ENCODE measurements at regions of chr21 and their contacts with region 1.

Region 1: DNA sequence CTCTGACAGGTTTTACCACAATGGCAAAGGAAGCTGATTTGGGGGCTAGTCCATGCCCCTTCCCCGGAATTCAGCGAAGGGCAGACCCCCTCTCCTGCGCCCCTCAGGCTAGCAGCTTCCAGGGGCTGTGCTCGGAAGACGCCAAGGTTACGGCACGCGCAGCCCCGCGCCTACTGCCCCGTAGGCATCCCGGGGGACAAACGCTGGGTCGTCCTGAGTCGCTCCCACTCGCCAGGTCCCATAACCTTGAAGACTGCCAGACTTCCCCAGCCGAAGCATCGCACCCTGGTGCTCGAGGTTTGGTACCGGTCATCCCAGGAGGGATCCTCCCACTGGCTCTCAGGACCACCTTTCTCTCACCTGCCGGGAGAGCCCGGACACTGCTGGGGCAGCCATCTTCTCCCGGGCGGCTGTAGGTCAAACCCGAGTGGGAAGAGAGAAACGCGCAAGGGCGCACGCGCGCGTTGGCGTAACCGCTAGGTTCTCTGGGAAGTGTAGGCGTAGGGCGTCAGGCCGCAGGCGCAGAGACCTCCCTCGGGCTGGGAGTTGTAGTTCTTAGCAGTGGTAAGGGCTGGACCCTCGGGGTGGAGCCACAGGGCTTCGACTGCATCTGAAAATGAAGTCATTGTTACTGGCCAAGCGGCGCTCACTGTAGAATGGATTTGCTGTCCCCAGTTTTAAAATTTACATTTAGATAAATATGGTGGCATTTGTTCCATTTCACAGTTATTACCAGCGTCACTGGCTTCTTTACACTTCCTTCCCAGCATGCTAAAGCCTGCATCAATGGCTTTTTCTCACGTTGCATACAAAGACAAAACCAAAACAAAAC is at the start of gene ATP5PO:
- DNase-seq: peak in 1 of 2 donors; percentile 97
- H3K4me3 ChIP-seq: peak within 1 kb of the TSS; percentile 94 to 100
- H3K27ac ChIP-seq: peak within 1 kb of the TSS; percentile 92
- H3K4me1 ChIP-seq: peaks cover 24% of the 10 kb centered on the region
- H3K27me3 ChIP-seq: no peaks in the 10 kb centered on the region
- CTCF ChIP-seq: no peak
- POLR2A ChIP-seq: peak in 1 of 2 donors; percentile 69
- total RNA-seq, gene ATP5PO: 133 TPM

Region 2: DNA sequence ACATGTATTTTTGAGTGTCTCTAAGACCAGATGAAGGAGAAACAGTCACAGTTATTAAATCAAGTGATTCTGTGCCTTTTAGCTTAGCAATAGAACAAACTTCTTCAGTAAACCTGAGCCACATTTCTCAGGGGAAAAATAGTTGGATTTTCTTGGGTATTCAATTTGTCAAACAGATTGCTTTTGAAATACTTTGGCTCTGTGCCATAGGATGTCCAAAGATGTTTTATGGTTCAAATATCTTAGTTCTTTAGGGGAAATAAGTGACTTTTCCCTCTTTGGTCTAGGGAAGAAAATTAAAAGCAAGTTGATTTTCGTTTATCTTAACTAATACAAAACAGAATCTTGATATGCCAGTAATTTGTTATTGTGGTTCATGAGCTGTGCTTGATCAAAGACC is 125.9 kb before region 1 on chr21:
- intact Hi-C with region 1: no loop called
- DNase-seq: no peak
- H3K4me3 ChIP-seq: no peak overlapping the region
- H3K27ac ChIP-seq: no peak overlapping the region
- H3K4me1 ChIP-seq: no peaks in the 10 kb centered on the region
- H3K27me3 ChIP-seq: no peaks in the 10 kb centered on the region
- CTCF ChIP-seq: no peak
- POLR2A ChIP-seq: no peak

Region 3: GRCh38 chr21:34054259-34054658 is 138.7 kb after region 1 on chr21:
- intact Hi-C with region 1: no loop called
- DNase-seq: no peak
- H3K4me3 ChIP-seq: no peak overlapping the region
- H3K27ac ChIP-seq: no peak overlapping the region
- H3K4me1 ChIP-seq: no peaks in the 10 kb centered on the region
- H3K27me3 ChIP-seq: no peaks in the 10 kb centered on the region
- CTCF ChIP-seq: no peak
- POLR2A ChIP-seq: no peak

Region 4: DNA sequence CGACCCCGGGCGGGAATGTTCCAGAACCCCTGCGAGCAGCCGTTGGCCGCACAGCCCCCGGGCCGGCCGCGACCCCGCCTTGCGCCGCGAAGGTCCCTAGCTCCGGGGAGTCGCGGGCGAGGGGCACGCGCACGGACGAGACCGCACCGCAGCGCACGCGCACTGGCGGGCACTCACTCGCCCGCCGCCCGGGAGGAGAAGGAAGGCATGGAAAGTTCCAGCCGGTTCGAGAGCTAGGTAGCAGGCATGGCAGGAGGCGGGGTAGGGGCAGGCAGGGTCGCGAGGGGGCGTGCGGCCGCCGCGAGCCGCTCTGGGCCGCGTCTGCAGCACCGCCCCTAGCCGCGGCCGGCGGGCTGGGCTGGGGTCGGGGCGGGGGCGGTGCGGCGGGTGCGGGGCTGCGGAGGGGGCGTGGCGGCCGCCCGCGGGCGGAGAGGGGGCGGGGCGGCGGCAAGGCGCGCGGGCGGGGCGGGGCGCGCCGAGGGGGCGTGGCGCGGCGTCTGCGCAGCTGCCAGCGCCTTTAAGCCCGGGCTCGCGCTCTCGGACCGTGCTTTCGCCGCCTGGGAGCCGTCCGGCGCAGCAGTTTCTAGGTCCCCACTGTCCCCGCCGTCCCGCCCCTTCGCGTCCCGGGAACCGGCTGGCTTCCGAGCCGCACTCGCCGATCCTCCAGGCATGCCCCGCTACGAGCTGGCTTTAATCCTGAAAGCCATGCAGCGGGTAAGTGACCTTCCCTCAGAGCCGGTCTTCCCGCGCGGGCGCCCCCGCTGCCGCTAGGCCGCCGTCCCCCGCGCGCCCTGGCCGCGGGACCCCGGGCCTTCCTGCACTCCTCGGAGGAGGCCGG is 157.7 kb after region 1 on chr21 and contains the starts of genes MRPS6 and SLC5A3:
- intact Hi-C with region 1: no loop called
- DNase-seq: no peak
- H3K4me3 ChIP-seq: peak within 1 kb of the TSS; percentile 69 to 89
- H3K27ac ChIP-seq: peak within 1 kb of the TSS; percentile 97
- H3K4me1 ChIP-seq: peaks cover 37% of the 10 kb centered on the region
- H3K27me3 ChIP-seq: no peaks in the 10 kb centered on the region
- CTCF ChIP-seq: peak in 1 of 3 experiments; percentile 7
- POLR2A ChIP-seq: peak in 1 of 2 donors; percentile 92
- total RNA-seq, gene MRPS6: 23.3 TPM
- total RNA-seq, gene SLC5A3: 17.9 TPM

Region 5: GRCh38 chr21:34284666-34285065 is 369.1 kb after region 1 on chr21:
- intact Hi-C with region 1: no loop called
- DNase-seq: no peak
- H3K4me3 ChIP-seq: no peak overlapping the region
- H3K27ac ChIP-seq: no peak overlapping the region
- H3K4me1 ChIP-seq: peaks cover 13% of the 10 kb centered on the region
- H3K27me3 ChIP-seq: no peaks in the 10 kb centered on the region
- CTCF ChIP-seq: no peak
- POLR2A ChIP-seq: no peak

Region 6: DNA sequence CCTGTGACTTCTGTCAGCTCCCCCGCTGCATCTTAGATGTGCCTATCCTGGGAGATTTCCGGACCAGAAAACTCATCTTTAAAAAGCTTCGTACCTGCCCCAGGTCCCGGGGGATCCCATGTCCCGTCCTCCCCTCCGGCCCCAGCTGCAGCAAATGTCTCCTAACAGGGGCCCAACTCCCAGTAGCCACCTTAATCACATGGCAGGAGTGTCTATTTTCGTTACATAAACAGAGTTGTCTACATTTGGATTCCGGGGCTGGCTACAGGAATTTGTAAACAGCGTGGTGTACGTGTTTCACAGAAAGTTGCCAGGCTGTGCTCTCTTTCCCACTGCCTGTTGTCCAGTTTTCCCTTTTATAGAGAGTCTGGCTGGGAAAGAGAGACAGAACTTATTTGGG is 430.3 kb after region 1 on chr21:
- intact Hi-C with region 1: loop called (anchors 2 kb)
- DNase-seq: peak in 1 of 2 donors; percentile 62
- H3K4me3 ChIP-seq: no peak overlapping the region
- H3K27ac ChIP-seq: peak overlapping the region; percentile 82
- H3K4me1 ChIP-seq: peaks cover 9% of the 10 kb centered on the region
- H3K27me3 ChIP-seq: no peaks in the 10 kb centered on the region
- CTCF ChIP-seq: no peak
- POLR2A ChIP-seq: no peak

Region 7: DNA sequence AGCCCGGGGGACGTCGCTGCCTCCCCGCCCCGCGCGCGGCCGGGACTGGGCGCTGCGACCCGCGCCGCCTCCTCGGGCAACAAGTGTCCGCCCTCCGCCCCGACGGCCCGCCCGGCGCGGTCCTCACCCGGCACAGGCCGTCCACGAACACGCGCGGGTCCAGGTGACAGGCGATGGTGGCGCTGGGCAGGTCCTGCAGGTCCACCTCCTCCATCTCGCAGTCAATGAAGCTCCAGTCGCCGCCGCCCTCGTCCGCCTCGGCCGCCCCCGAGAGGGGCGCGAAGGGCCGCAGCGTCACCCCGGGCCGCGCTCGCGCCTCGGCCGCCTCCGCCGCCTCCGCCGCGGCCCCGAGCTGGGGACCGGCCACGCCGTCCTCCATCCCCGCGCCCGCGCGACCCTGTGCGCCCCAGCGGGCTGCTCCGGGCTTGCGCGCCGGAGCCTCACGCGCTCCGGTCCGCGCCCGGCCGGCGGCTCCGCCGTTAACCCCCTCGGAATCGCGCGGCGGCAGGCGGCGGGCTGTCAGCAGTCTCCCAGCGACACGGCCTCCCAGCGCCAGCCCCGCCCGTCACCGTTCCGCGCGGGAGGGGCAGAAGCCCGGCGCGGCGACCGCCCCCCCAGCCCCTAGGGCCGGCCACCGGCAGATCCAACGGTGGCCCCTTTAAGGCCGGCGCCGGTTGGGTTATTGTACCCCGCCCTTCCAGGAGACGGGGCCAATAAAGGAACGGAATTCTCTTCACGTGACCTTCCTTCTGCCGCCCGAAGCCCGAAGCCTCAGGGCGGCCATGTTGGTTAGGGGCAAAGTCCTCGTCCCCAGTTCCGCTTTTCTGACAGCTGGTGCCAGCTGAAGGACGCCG is 699.3 kb after region 1 on chr21 and contains the start of gene RCAN1:
- intact Hi-C with region 1: loop called (anchors 5 kb)
- DNase-seq: peak in 1 of 2 donors; percentile 93
- H3K4me3 ChIP-seq: peak within 1 kb of the TSS; percentile 80 to 97
- H3K27ac ChIP-seq: peak within 1 kb of the TSS; percentile 73
- H3K4me1 ChIP-seq: peaks cover 20% of the 10 kb centered on the region
- H3K27me3 ChIP-seq: no peaks in the 10 kb centered on the region
- CTCF ChIP-seq: no peak
- POLR2A ChIP-seq: no peak
- total RNA-seq, gene RCAN1: 29.2 TPM

Measured in vagina (tissue), 2 donors.